Head of caudate nucleus (tissue), 42 donors: ENCODE measurements at regions of chr17 and their contacts with region 1.

Region 1: GRCh38 chr17:44533533-44534246 is 23.6 kb upstream of the FZD2 start:
- DNase-seq: peak; percentile 57 to 92 (median 82)

Region 2: DNA sequence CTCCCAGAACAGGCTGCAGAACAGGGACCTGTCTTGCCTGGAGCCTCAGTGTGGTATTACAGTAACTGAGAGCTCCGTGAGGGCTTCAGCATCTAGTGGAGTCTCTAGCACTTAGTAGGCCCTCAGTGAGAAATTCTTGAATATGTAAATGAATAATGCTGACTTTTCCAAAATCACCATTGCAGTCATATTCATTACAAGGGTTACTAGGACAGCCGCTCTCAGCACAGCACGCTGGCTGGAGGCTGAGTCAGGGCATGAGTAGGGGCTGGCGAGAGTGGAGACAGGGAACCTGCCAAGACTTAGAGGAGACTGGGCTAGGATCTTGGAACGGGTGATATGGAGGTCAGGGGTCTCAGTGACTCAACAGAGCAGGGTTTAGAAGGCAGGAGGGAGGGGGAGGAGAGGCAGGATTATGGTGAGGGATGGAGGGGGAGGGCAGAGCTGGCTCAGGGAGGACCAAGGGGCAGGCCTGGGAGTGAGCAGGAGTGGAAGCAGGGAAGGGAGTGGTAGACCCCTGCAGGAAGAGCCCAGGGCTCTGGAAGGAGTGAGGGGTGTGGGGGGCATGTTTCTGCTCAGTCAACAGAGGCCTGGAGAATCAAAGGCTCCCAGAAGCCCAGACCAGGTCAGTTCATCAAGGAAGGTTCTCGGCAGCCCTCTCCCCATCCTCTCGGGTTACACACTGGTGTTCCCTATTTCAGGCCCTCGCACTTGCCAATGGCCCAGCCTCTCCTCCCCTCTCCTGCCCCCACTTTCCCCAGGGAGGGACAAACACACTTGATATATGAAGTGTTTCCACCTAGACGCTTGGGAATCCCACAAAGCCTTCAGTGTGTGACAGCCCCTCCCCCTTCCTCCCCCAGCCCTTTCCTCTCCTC is 65.8 kb after region 1 on chr17:
- intact Hi-C with region 1: no loop called
- DNase-seq: peak in 10 of 42 donors; percentile 3 to 74 (median 18)

Region 3: GRCh38 chr17:44636562-44636961 is 102.9 kb after region 1 on chr17:
- intact Hi-C with region 1: loop called (anchors 10 kb)
- DNase-seq: no peak